ENCODE measurements at regions of chr11 and their contacts with region 1.

Region 1: DNA sequence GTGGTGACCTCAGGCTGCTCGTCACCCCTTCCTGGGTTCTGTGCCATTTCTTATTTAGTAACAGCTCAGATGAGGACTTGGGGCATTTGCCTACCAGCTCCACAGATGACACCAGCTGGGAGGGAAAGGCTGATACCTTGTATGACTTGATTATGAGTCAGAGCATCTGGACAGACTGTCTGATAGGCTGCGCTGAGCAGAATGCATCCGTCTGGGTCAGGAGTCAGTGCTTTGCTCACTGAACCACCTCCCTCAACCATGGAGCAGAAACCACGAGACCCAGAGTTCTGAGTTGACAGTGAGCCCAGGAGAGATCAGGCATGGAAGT is 6.8 kb downstream of the ST14 start:
- DNase-seq: no peak
- ATAC-seq: peak; percentile 89
- H3K4me3 ChIP-seq: no peak overlapping the region
- H3K27ac ChIP-seq: no peak overlapping the region
- H3K4me1 ChIP-seq: no peaks in the 10 kb centered on the region
- H3K27me3 ChIP-seq: peaks cover 2 to 3% of the 10 kb centered on the region in 2 experiments; a peak in 2 of 4 replicates
- CTCF ChIP-seq: no peak
- EP300 ChIP-seq: no peak
- POLR2A ChIP-seq: no peak
- RAD21 ChIP-seq: no peak

Region 2: DNA sequence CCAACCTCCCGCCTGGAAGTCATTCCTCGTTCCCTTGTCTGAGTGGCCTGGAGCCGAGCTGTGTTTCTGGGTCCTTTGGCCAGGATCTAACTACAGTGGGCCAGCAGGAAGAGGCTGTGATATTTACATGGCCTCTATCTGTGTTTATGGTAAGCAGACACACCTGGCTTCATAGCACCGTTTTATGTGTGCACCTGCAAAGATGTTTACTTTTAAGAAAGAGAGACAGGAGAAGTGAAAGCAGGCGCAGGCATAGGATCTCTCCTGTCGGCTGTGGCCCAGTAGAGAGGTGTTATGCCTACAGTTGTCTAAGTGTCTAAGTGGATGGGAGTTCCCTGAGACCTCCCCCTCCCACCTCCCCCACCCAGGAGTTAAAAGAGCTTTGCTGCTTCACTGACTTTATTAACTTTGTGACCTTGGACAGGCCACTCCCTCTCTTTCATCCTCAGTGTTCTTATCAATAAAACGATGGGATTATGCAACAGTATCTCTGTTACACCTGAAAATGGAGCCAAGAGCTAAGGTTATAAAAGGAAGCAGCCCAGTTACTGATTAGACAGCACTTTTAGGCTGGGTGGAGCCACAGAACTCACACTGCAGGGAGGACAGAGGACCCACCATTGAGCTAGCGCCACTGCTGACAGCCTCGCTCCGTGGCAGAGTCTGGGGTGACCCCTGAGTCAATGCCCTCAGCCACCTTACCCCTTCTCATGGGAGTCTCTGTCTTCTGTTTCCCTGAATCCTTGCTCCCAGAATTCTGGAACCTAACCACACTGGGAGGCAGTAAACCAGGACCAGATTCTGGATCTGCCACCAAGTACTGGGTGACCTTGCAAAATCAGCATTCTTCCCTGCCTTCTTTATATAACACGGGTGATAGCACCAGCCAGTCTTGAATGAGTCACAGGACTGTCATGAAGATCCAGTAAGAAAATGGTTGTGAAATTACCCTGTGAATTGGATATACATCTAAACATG is 15.2 kb after region 1 on chr11:
- CTCF ChIA-PET with region 1: interaction called, 6 read pairs
- POLR2A ChIA-PET with region 1: interaction called, 6 read pairs
- RAD21 ChIA-PET with region 1: interaction called, 4 read pairs
- SMC1A ChIA-PET with region 1: interaction called, 21 read pairs
- in situ Hi-C with region 1: no loop called
- intact Hi-C with region 1: no loop called
- DNase-seq: no peak
- ATAC-seq: peak; percentile 74
- H3K4me3 ChIP-seq: no peak overlapping the region
- H3K27ac ChIP-seq: no peak overlapping the region
- H3K4me1 ChIP-seq: peaks cover 35% of the 10 kb centered on the region
- H3K27me3 ChIP-seq: no peaks in the 10 kb centered on the region
- CTCF ChIP-seq: no peak
- EP300 ChIP-seq: peak in 1 of 2 experiments; percentile 41; a peak in 1 of 4 replicates
- POLR2A ChIP-seq: no peak
- RAD21 ChIP-seq: no peak